Activated T-helper 1 cell treated with anti-CD3 and anti-CD28 coated beads, Interleukin-12 subunit alpha, Interleukin-12 subunit beta, Interleukin-2, Interleukin-4 antibody, amounts not matched to agents 30 ng/mL and 10 ng/mL and 1 ng/mL, durations not matched to agents 14 hours and 24 hours and 36 hours (primary cell): ENCODE measurements at regions of chr18 and their contacts with region 1.

Region 1: DNA sequence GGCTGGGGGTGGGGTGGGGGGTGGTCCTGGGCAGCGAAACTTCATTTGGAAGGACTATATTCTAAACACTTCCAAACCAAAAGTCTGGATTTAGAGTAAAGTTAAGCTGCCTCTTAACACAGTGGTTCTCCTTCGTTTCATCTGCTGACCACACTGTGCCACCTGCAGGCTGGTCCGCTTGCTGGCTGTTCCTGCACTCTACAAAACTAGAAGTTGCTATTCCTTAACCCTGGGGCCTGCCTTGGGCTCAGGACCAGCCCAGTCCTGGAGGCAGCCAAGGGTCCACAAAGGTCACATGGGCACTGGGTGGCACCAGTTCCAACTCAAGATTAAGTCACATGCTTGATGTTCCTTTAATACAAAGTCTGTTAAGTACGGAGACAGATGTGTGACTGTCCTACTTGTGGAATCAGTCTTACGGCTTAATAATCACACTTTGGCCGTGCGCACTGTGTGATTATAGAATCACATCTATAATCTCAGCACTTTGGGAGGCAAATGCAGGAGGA is 195.4 kb downstream of the FAM210A start:
- DNase-seq: no peak
- H3K4me3 Mint-ChIP-seq: no peak overlapping the region
- H3K27ac Mint-ChIP-seq: no peak overlapping the region
- H3K4me1 Mint-ChIP-seq: peaks cover 29% of the 10 kb centered on the region
- H3K27me3 Mint-ChIP-seq: no peaks in the 10 kb centered on the region

Region 2: GRCh38 chr18:12768625-12769024 is 762.3 kb before region 1 on chr18:
- intact Hi-C with region 1: no loop called
- DNase-seq: no peak
- H3K4me3 Mint-ChIP-seq: no peak overlapping the region
- H3K27ac Mint-ChIP-seq: no peak overlapping the region
- H3K4me1 Mint-ChIP-seq: peaks cover 7% of the 10 kb centered on the region
- H3K27me3 Mint-ChIP-seq: no peaks in the 10 kb centered on the region

Region 3: DNA sequence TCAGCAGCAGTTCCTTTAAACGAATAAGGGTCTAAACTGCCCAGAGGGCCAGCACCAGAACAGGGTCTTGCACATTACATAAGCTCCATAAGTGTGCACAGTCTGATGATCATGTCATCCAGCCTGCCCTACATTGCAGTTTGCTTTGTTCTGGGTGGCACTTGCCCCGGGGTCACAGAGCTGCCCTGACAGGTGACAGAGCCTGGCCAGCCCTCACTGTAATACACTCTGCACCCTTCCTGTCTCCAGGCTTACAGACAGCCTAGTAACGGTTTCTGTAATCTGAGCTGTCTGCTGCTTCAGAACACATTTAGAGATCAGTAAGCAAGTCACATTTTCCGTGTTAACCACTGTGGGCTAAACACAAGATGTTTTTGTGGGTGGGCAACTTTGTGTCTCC is 17.9 kb before region 1 on chr18:
- intact Hi-C with region 1: loop called (anchors 2 kb)
- DNase-seq: no peak
- H3K4me3 Mint-ChIP-seq: no peak overlapping the region
- H3K27ac Mint-ChIP-seq: peak overlapping the region; percentile 11
- H3K4me1 Mint-ChIP-seq: peaks cover 42% of the 10 kb centered on the region
- H3K27me3 Mint-ChIP-seq: no peaks in the 10 kb centered on the region